ENCODE measurements at regions of chr10 and their contacts with region 1.

Region 1: DNA sequence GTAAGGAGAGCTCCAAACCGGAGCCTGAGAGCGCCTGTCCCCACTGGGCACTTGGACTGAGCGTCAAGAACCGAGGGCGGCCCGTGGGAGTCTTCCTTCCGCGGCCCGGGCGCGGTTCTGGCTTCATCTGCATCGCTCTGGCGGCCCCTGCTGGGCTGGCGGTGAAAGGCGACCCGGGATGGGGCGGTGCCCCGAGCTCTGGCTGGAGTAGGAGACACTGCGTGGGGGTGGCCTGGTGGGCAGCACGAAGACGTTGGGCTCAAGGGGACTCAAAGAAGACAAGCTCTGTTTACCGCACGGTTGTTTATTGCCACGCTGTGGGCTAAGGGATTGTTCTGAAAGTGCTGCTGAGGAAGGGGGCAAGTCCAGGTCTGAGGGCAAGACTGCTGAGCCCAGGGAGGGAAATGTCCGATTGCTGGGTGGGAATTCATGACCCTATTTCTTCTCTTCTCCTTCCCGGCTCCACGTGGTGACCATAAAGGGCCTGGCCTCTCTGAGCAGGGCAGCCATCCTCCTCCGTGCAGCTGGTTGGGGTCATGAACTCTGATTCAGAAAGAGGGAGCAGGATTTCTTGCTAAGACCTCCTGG is 29.8 kb downstream of the PLAU start:
- DNase-seq: peak; percentile 71 to 91 (median 81)
- ATAC-seq: peak; percentile 100
- H3K4me3 ChIP-seq: no peak overlapping the region
- H3K4me3 Mint-ChIP-seq: peak overlapping the region; percentile 37
- H3K27ac ChIP-seq: no peak overlapping the region
- H3K27ac Mint-ChIP-seq: no peak overlapping the region
- H3K4me1 ChIP-seq: peaks cover 4% of the 10 kb centered on the region
- H3K4me1 Mint-ChIP-seq: peaks cover 6% of the 10 kb centered on the region
- H3K27me3 ChIP-seq: no peaks in the 10 kb centered on the region
- H3K27me3 Mint-ChIP-seq: no peaks in the 10 kb centered on the region
- CTCF ChIP-seq: peak; percentile 95

Region 2: DNA sequence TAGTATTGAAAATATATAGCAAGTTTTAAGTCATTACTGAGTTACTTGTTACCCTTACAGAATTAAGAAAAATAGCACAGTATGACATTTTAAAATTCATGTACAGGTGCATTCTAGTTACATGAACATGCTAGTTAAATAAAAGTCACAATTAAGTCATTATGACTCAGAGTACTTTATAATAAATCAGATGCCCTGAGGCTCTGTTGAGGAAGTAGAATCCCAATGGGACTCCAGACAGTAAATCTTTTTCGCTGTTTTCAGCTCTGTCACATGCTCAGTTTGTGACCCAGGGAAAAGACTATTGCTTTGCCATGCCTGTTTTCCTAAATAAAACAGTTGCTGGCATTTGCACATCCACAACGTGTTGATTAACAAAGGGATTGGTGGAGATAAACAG is 809.4 kb before region 1 on chr10:
- CTCF ChIA-PET with region 1: no interaction called
- POLR2A ChIA-PET with region 1: no interaction called
- intact Hi-C with region 1: no loop called
- DNase-seq: no peak
- ATAC-seq: no peak
- H3K4me3 ChIP-seq: no peak overlapping the region
- H3K4me3 Mint-ChIP-seq: no peak overlapping the region
- H3K27ac ChIP-seq: no peak overlapping the region
- H3K27ac Mint-ChIP-seq: no peak overlapping the region
- H3K4me1 ChIP-seq: no peaks in the 10 kb centered on the region
- H3K4me1 Mint-ChIP-seq: no peaks in the 10 kb centered on the region
- H3K27me3 ChIP-seq: no peaks in the 10 kb centered on the region
- H3K27me3 Mint-ChIP-seq: no peaks in the 10 kb centered on the region
- CTCF ChIP-seq: no peak

Region 3: GRCh38 chr10:73716251-73716650 is 224.5 kb before region 1 on chr10:
- CTCF ChIA-PET with region 1: no interaction called
- POLR2A ChIA-PET with region 1: no interaction called
- intact Hi-C with region 1: no loop called
- DNase-seq: no peak
- ATAC-seq: no peak
- H3K4me3 ChIP-seq: no peak overlapping the region
- H3K4me3 Mint-ChIP-seq: no peak overlapping the region
- H3K27ac ChIP-seq: no peak overlapping the region
- H3K27ac Mint-ChIP-seq: no peak overlapping the region
- H3K4me1 ChIP-seq: no peaks in the 10 kb centered on the region
- H3K4me1 Mint-ChIP-seq: no peaks in the 10 kb centered on the region
- H3K27me3 ChIP-seq: no peaks in the 10 kb centered on the region
- H3K27me3 Mint-ChIP-seq: no peaks in the 10 kb centered on the region
- CTCF ChIP-seq: no peak

Region 4: GRCh38 chr10:73848821-73849489 is 91.8 kb before region 1 on chr10:
- CTCF ChIA-PET with region 1: interaction called, 95 read pairs
- POLR2A ChIA-PET with region 1: no interaction called
- intact Hi-C with region 1: loop called (anchors 1 kb)
- DNase-seq: peak; percentile 84 to 97 (median 92)
- ATAC-seq: peak; percentile 99
- H3K4me3 ChIP-seq: no peak overlapping the region
- H3K4me3 Mint-ChIP-seq: no peak overlapping the region
- H3K27ac ChIP-seq: peak overlapping the region; percentile 20 to 23
- H3K27ac Mint-ChIP-seq: peak overlapping the region; percentile 90
- H3K4me1 ChIP-seq: peaks cover 11% of the 10 kb centered on the region
- H3K4me1 Mint-ChIP-seq: peaks cover 13% of the 10 kb centered on the region
- H3K27me3 ChIP-seq: no peaks in the 10 kb centered on the region
- H3K27me3 Mint-ChIP-seq: no peaks in the 10 kb centered on the region
- CTCF ChIP-seq: peak; percentile 96

Region 5: DNA sequence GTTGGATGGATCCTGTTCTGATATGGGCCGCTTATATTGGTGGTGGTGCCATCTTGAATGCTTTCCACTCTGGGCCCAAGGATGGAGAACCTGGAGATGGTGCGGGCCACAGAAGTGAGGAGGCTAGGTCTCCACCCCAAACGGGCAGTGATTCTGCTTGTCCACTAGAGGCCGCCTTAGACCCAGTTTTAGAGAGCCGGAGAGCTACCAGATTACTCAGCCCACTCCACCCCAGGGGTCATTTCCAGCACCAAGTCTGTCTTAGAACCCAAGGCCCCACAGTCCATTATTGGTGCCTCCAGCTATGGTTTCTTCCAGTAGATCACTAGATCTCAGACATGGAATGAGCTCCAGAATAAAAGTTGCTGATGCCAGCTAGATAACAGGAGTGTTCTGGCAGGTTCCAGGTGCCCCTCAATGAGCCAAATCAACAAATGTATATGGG is 54.6 kb before region 1 on chr10:
- CTCF ChIA-PET with region 1: interaction called, 618 read pairs
- POLR2A ChIA-PET with region 1: interaction called, 9 read pairs
- intact Hi-C with region 1: loop called (anchors 1 kb)
- DNase-seq: peak; percentile 34 to 82 (median 66)
- ATAC-seq: peak; percentile 99
- H3K4me3 ChIP-seq: no peak overlapping the region
- H3K4me3 Mint-ChIP-seq: no peak overlapping the region
- H3K27ac ChIP-seq: no peak overlapping the region
- H3K27ac Mint-ChIP-seq: no peak overlapping the region
- H3K4me1 ChIP-seq: no peaks in the 10 kb centered on the region
- H3K4me1 Mint-ChIP-seq: no peaks in the 10 kb centered on the region
- H3K27me3 ChIP-seq: no peaks in the 10 kb centered on the region
- H3K27me3 Mint-ChIP-seq: no peaks in the 10 kb centered on the region
- CTCF ChIP-seq: peak; percentile 78

Region 6: DNA sequence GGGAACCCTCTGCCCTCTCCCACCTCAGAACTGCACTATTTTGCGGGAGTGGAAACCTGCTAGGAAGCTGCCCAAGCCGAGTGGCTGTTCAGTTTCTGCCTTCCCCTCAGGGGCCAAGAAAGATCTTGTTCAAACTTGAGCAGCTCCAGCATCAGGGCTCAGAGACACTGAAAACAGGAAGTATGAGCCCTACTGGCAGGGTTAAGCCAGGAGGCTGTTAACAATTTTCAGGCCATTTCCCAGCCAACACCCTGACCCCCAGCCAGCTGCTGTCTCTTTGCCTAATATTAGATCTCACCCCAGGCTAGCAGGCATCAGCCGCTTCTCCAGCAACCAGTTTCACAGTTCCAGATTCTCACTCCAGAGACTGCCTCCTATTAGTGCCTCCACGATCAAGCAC is 20.6 kb before region 1 on chr10:
- CTCF ChIA-PET with region 1: interaction called, 62 read pairs
- POLR2A ChIA-PET with region 1: no interaction called
- intact Hi-C with region 1: no loop called
- DNase-seq: peak in 1 of 9 experiments; percentile 27
- ATAC-seq: no peak
- H3K4me3 ChIP-seq: no peak overlapping the region
- H3K4me3 Mint-ChIP-seq: no peak overlapping the region
- H3K27ac ChIP-seq: no peak overlapping the region
- H3K27ac Mint-ChIP-seq: no peak overlapping the region
- H3K4me1 ChIP-seq: peaks cover 29% of the 10 kb centered on the region
- H3K4me1 Mint-ChIP-seq: peaks cover 23% of the 10 kb centered on the region
- H3K27me3 ChIP-seq: peaks cover 3 to 12% of the 10 kb centered on the region in 2 experiments
- H3K27me3 Mint-ChIP-seq: peaks cover 39% of the 10 kb centered on the region
- CTCF ChIP-seq: no peak

Region 7: DNA sequence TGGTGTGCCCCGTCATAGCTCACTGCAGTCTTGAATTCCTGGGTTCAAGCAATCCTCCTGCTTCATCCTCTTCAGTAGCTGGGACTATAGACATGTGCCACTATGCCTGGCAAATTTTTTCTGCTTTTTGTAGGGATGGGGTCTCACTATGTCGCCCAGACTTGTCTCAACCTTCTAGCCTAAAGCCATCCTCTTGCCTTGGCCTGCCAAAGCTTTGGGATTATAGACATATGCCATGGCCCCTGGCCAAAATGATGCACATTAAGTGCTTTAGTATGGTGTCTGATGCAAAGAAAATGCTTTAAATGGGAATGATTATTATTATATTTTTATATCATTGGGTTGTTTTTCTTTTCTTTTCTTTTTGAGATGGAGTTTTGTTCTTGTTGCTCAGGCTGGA is 24.0 kb after region 1 on chr10:
- CTCF ChIA-PET with region 1: interaction called, 11 read pairs
- POLR2A ChIA-PET with region 1: interaction called, 4 read pairs
- intact Hi-C with region 1: no loop called
- DNase-seq: no peak
- ATAC-seq: no peak
- H3K4me3 ChIP-seq: no peak overlapping the region
- H3K4me3 Mint-ChIP-seq: no peak overlapping the region
- H3K27ac ChIP-seq: no peak overlapping the region
- H3K27ac Mint-ChIP-seq: no peak overlapping the region
- H3K4me1 ChIP-seq: no peaks in the 10 kb centered on the region
- H3K4me1 Mint-ChIP-seq: peaks cover 16% of the 10 kb centered on the region
- H3K27me3 ChIP-seq: no peaks in the 10 kb centered on the region
- H3K27me3 Mint-ChIP-seq: no peaks in the 10 kb centered on the region
- CTCF ChIP-seq: no peak

Region 8: GRCh38 chr10:74035303-74035702 is 94.6 kb after region 1 on chr10:
- CTCF ChIA-PET with region 1: interaction called, 13 read pairs
- POLR2A ChIA-PET with region 1: interaction called, 3 read pairs
- intact Hi-C with region 1: no loop called
- DNase-seq: peak in 2 of 9 experiments; percentile 27 to 48
- ATAC-seq: no peak
- H3K4me3 ChIP-seq: no peak overlapping the region
- H3K4me3 Mint-ChIP-seq: no peak overlapping the region
- H3K27ac ChIP-seq: peak overlapping the region in 1 of 2 experiments; percentile 36
- H3K27ac Mint-ChIP-seq: peak overlapping the region; percentile 34
- H3K4me1 ChIP-seq: no peaks in the 10 kb centered on the region
- H3K4me1 Mint-ChIP-seq: peaks cover 22% of the 10 kb centered on the region
- H3K27me3 ChIP-seq: no peaks in the 10 kb centered on the region
- H3K27me3 Mint-ChIP-seq: no peaks in the 10 kb centered on the region
- CTCF ChIP-seq: peak; percentile 15

Region 9: GRCh38 chr10:74081192-74081803 is 140.6 kb after region 1 on chr10:
- CTCF ChIA-PET with region 1: interaction called, 24 read pairs
- POLR2A ChIA-PET with region 1: no interaction called
- intact Hi-C with region 1: loop called in 1 of 2 experiments (anchors 5 kb)
- DNase-seq: peak; percentile 7 to 67 (median 36)
- ATAC-seq: peak; percentile 62
- H3K4me3 ChIP-seq: no peak overlapping the region
- H3K4me3 Mint-ChIP-seq: no peak overlapping the region
- H3K27ac ChIP-seq: no peak overlapping the region
- H3K27ac Mint-ChIP-seq: no peak overlapping the region
- H3K4me1 ChIP-seq: peaks cover 4% of the 10 kb centered on the region
- H3K4me1 Mint-ChIP-seq: peaks cover 17% of the 10 kb centered on the region
- H3K27me3 ChIP-seq: no peaks in the 10 kb centered on the region
- H3K27me3 Mint-ChIP-seq: no peaks in the 10 kb centered on the region
- CTCF ChIP-seq: peak; percentile 66

Region 10: GRCh38 chr10:74272288-74272687 is 331.6 kb after region 1 on chr10:
- CTCF ChIA-PET with region 1: no interaction called
- POLR2A ChIA-PET with region 1: no interaction called
- intact Hi-C with region 1: no loop called
- DNase-seq: no peak
- ATAC-seq: no peak
- H3K4me3 ChIP-seq: no peak overlapping the region
- H3K4me3 Mint-ChIP-seq: no peak overlapping the region
- H3K27ac ChIP-seq: no peak overlapping the region
- H3K27ac Mint-ChIP-seq: no peak overlapping the region
- H3K4me1 ChIP-seq: no peaks in the 10 kb centered on the region
- H3K4me1 Mint-ChIP-seq: peaks cover 13% of the 10 kb centered on the region
- H3K27me3 ChIP-seq: no peaks in the 10 kb centered on the region
- H3K27me3 Mint-ChIP-seq: no peaks in the 10 kb centered on the region
- CTCF ChIP-seq: no peak